BJ (cell line): ENCODE measurements at regions of chr2 and their contacts with region 1.

Region 1: GRCh38 chr2:189347540-189347939 is 93.7 kb upstream of the WDR75 start:
- DNase-seq: peak; percentile 79
- H3K4me3 ChIP-seq: no peak overlapping the region
- H3K27me3 ChIP-seq: no peaks in the 10 kb centered on the region
- CTCF ChIP-seq: peak; percentile 10; the same call in 1 of the 2 replicates

Region 2: GRCh38 chr2:189336276-189336975 is 11.1 kb before region 1 on chr2:
- CTCF ChIA-PET with region 1: no interaction called
- POLR2A ChIA-PET with region 1: no interaction called
- DNase-seq: no peak
- H3K4me3 ChIP-seq: no peak overlapping the region
- H3K27me3 ChIP-seq: no peaks in the 10 kb centered on the region
- CTCF ChIP-seq: no peak

Region 3: GRCh38 chr2:189362283-189362682 is 14.7 kb after region 1 on chr2:
- CTCF ChIA-PET with region 1: no interaction called
- POLR2A ChIA-PET with region 1: no interaction called
- DNase-seq: no peak
- H3K4me3 ChIP-seq: no peak overlapping the region
- H3K27me3 ChIP-seq: no peaks in the 10 kb centered on the region
- CTCF ChIP-seq: no peak

Region 4: DNA sequence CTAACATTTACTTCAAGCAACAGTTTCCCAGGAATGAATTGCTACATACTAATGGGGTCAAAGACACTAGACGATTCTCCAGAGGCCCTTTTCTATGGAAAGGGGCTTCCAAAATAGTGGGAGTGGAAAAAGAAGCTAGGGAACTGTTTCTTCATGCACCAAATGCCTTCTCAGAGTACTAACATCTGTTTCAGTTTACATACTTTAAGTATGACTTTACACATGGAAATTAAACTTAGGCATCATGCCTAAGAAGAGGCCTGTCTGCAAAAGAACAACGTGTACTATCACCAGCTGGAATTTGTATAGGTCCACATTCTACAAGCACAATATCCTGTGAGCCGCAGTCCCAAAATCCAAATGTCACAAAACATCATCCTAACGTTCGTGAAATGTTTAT is 64.3 kb after region 1 on chr2:
- CTCF ChIA-PET with region 1: interaction called, 11 read pairs
- POLR2A ChIA-PET with region 1: no interaction called
- DNase-seq: peak; percentile 65
- H3K4me3 ChIP-seq: no peak overlapping the region
- H3K27me3 ChIP-seq: no peaks in the 10 kb centered on the region
- CTCF ChIP-seq: no peak